ENCODE measurements at regions of chr14 and their contacts with region 1.

Region 1: DNA sequence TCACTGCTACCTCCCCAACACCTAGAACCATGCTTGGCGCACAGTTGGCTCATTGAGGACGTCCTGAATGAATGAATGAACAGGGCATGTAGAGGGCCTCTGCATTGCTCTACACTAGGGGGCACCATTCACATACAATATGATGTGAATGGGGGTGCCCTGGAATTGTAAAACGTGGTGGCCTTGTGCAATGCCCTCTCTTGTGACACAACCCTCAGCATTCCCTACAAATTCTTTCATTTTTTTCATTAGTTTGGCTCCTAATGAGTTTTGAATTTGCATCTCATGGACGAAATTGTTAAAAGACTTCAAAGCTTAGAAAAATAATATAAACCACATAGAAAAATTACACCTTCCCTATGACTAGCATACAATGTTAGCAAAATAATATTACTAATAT is 2.3 kb upstream of the DIO2 start:
- DNase-seq: peak; percentile 16
- ATAC-seq: peak; percentile 87
- H3K4me3 ChIP-seq: no peak overlapping the region
- H3K27ac ChIP-seq: no peak overlapping the region
- H3K4me1 ChIP-seq: no peaks in the 10 kb centered on the region
- H3K27me3 ChIP-seq: no peaks in the 10 kb centered on the region
- CTCF ChIP-seq: peak; percentile 30 to 75 (median 64); a peak in 5 of 6 replicates
- POLR2A ChIP-seq: no peak
- RAD21 ChIP-seq: peak; percentile 64

Region 2: GRCh38 chr14:80364274-80364673 is 150.7 kb after region 1 on chr14:
- CTCF ChIA-PET with region 1: no interaction called
- POLR2A ChIA-PET with region 1: no interaction called
- RAD21 ChIA-PET with region 1: no interaction called
- intact Hi-C with region 1: loop called (anchors 10 kb)
- DNase-seq: no peak
- ATAC-seq: peak; percentile 67
- H3K4me3 ChIP-seq: no peak overlapping the region
- H3K27ac ChIP-seq: no peak overlapping the region
- H3K4me1 ChIP-seq: no peaks in the 10 kb centered on the region
- H3K27me3 ChIP-seq: no peaks in the 10 kb centered on the region
- CTCF ChIP-seq: peak; percentile 14 to 50 (median 28); a peak in 3 of 6 replicates
- POLR2A ChIP-seq: no peak
- RAD21 ChIP-seq: peak; percentile 36; the same call in 1 of the 2 replicates

Region 3: DNA sequence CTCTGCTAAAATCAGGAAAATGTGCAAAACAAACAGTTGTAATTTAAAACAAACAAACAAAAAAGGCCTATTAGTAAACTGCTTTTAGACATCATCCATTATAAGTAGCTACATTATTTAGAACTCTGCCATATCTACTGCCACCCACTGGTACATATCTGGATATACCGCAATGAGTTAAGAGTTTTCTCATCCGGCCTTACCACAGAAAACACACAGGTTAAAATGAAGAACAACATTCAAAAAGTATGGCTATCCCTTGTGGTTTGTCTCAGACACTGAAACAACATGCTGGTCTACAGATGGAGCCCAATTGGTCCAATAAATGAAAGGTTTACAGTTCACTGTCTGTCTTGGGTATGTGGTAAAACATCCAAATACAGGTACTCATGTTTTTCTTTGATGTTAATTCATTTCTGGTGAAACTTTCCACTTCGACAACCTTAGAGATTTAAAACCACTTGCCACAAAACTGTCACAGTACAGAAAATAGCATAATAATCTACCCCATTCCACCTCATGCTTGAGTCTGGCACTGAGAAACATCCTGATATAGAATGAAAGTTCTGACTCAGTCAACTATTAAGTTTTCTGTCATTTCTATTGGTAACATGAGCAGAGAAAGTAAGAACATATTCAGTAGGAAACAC is 373.6 kb after region 1 on chr14:
- CTCF ChIA-PET with region 1: no interaction called
- POLR2A ChIA-PET with region 1: no interaction called
- RAD21 ChIA-PET with region 1: interaction called in 1 of 2 experiments, 3 read pairs
- intact Hi-C with region 1: loop called (anchors 5 kb)
- DNase-seq: peak; percentile 21
- ATAC-seq: peak; percentile 78
- H3K4me3 ChIP-seq: no peak overlapping the region
- H3K27ac ChIP-seq: no peak overlapping the region
- H3K4me1 ChIP-seq: peaks cover 9 to 11% of the 10 kb centered on the region in 2 experiments
- H3K27me3 ChIP-seq: no peaks in the 10 kb centered on the region
- CTCF ChIP-seq: peak in 2 of 3 experiments; percentile 60 to 69; a peak in 4 of 6 replicates
- POLR2A ChIP-seq: no peak
- RAD21 ChIP-seq: peak; percentile 34; the same call in 1 of the 2 replicates

Measured in HCT116 (cell line).